ENCODE measurements at regions of chr7 and their contacts with region 1.

Region 1: DNA sequence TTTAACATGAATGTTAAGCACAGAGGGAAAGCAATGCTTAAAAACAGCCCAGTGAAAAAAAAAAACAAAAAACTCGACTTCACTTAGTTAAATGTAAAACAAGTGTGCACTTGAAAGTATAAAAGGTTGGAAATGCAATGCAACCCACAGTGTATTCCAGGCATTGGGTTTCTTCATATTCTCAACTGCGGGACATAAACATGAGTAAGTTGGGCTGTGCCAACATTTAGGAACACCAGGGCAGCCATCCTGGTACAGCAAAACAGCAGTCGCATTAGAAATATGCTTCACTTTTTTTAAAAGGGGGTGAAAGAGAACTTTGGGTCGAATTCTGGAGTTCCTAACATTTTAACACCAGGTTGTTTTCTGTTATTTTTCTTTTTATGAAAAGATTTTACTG is 937 bp downstream of the STEAP1 start:
- DNase-seq: no peak
- ATAC-seq: no peak
- H3K4me3 ChIP-seq: no peak overlapping the region
- H3K4me3 Mint-ChIP-seq: no peak overlapping the region
- H3K27ac ChIP-seq: no peak overlapping the region
- H3K27ac Mint-ChIP-seq: no peak overlapping the region
- H3K4me1 ChIP-seq: no peaks in the 10 kb centered on the region
- H3K4me1 Mint-ChIP-seq: peaks cover 3% of the 10 kb centered on the region
- H3K27me3 ChIP-seq: no peaks in the 10 kb centered on the region
- H3K27me3 Mint-ChIP-seq: peaks cover 22% of the 10 kb centered on the region
- CTCF ChIP-seq: no peak

Region 2: DNA sequence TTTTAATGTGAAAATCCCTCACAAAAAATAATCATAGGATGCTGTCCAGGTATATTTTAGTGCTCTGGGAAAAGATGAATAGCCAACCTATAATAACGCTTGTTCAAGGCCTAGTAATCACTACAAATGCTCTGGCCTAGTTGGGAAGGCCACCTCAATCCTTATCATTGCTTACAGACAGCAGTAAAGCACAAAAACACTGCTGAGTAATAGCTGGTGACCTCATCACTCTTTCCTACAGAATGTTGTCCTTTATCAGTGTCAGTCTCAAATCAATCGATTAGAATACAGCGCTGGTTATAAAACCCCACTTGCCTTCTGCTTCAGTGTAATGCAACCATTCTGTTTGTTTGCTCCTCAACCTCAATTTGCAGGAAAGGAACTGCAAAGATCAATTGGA is 73.6 kb before region 1 on chr7:
- CTCF ChIA-PET with region 1: no interaction called
- POLR2A ChIA-PET with region 1: no interaction called
- intact Hi-C with region 1: no loop called
- DNase-seq: no peak
- ATAC-seq: no peak
- H3K4me3 ChIP-seq: no peak overlapping the region
- H3K4me3 Mint-ChIP-seq: no peak overlapping the region
- H3K27ac ChIP-seq: no peak overlapping the region
- H3K27ac Mint-ChIP-seq: no peak overlapping the region
- H3K4me1 ChIP-seq: no peaks in the 10 kb centered on the region
- H3K4me1 Mint-ChIP-seq: no peaks in the 10 kb centered on the region
- H3K27me3 ChIP-seq: peaks cover 0 to 2% of the 10 kb centered on the region in 2 experiments
- H3K27me3 Mint-ChIP-seq: peaks cover 6% of the 10 kb centered on the region
- CTCF ChIP-seq: no peak

Region 3: GRCh38 chr7:90244909-90245851 is 90.0 kb after region 1 on chr7 and contains the start of gene CFAP69:
- CTCF ChIA-PET with region 1: interaction called, 4 read pairs
- POLR2A ChIA-PET with region 1: no interaction called
- intact Hi-C with region 1: loop called in 1 of 2 experiments (anchors 5 kb)
- DNase-seq: peak; percentile 71 to 90 (median 84)
- ATAC-seq: peak; percentile 86
- H3K4me3 ChIP-seq: peak within 1 kb of the TSS; percentile 78 to 83
- H3K4me3 Mint-ChIP-seq: peak within 1 kb of the TSS; percentile 92
- H3K27ac ChIP-seq: peak within 1 kb of the TSS in 1 of 2 experiments; percentile 54
- H3K27ac Mint-ChIP-seq: no peak within 1 kb of the TSS
- H3K4me1 ChIP-seq: peaks cover 3% of the 10 kb centered on the region
- H3K4me1 Mint-ChIP-seq: peaks cover 22% of the 10 kb centered on the region
- H3K27me3 ChIP-seq: peaks cover 0 to 9% of the 10 kb centered on the region in 2 experiments
- H3K27me3 Mint-ChIP-seq: peaks cover 54% of the 10 kb centered on the region
- CTCF ChIP-seq: peak; percentile 19
- total RNA-seq, gene CFAP69: not detected

Region 4: DNA sequence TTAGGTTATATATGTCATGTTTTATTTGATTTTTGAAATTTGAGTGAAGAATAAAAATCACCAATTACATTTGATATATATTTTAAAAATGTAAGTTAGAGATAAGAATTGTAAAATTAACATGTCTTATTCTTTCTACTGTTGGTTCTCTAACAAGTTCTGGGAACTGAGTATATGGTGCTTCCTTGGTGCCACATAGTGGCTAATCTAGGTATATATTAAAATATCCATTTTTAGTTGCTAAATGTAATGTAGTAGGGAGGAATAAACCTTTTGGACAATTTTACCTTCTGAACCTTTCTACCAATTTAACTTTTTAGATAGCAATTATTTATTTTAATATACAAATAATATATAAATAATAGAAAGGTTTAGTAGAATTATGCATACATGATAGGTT is 107.2 kb after region 1 on chr7:
- CTCF ChIA-PET with region 1: no interaction called
- POLR2A ChIA-PET with region 1: no interaction called
- intact Hi-C with region 1: loop called (anchors 2 to 5 kb)
- DNase-seq: peak in 1 of 9 experiments; percentile 18
- ATAC-seq: peak; percentile 56
- H3K4me3 ChIP-seq: no peak overlapping the region
- H3K4me3 Mint-ChIP-seq: no peak overlapping the region
- H3K27ac ChIP-seq: no peak overlapping the region
- H3K27ac Mint-ChIP-seq: no peak overlapping the region
- H3K4me1 ChIP-seq: no peaks in the 10 kb centered on the region
- H3K4me1 Mint-ChIP-seq: no peaks in the 10 kb centered on the region
- H3K27me3 ChIP-seq: no peaks in the 10 kb centered on the region
- H3K27me3 Mint-ChIP-seq: peaks cover 15% of the 10 kb centered on the region
- CTCF ChIP-seq: peak; percentile 51

Region 5: GRCh38 chr7:90403174-90404113 is 248.2 kb after region 1 on chr7 and contains the start of gene CLDN12:
- CTCF ChIA-PET with region 1: no interaction called
- POLR2A ChIA-PET with region 1: no interaction called
- intact Hi-C with region 1: loop called in 1 of 2 experiments (anchors 1 kb)
- DNase-seq: peak; percentile 44 to 94 (median 71)
- ATAC-seq: peak; percentile 98
- H3K4me3 ChIP-seq: peak within 1 kb of the TSS; percentile 64 to 84
- H3K4me3 Mint-ChIP-seq: peak within 1 kb of the TSS; percentile 96
- H3K27ac ChIP-seq: peak within 1 kb of the TSS; percentile 50 to 66
- H3K27ac Mint-ChIP-seq: peak within 1 kb of the TSS; percentile 93
- H3K4me1 ChIP-seq: peaks cover 11% of the 10 kb centered on the region
- H3K4me1 Mint-ChIP-seq: peaks cover 18% of the 10 kb centered on the region
- H3K27me3 ChIP-seq: no peaks in the 10 kb centered on the region
- H3K27me3 Mint-ChIP-seq: no peaks in the 10 kb centered on the region
- CTCF ChIP-seq: no peak
- total RNA-seq, gene CLDN12: 1.8 to 1.9 TPM

Region 6: GRCh38 chr7:90424720-90425119 is 269.5 kb after region 1 on chr7:
- CTCF ChIA-PET with region 1: interaction called, 44 read pairs
- POLR2A ChIA-PET with region 1: no interaction called
- intact Hi-C with region 1: loop called (anchors 1 kb)
- DNase-seq: no peak
- ATAC-seq: no peak
- H3K4me3 ChIP-seq: no peak overlapping the region
- H3K4me3 Mint-ChIP-seq: no peak overlapping the region
- H3K27ac ChIP-seq: no peak overlapping the region
- H3K27ac Mint-ChIP-seq: no peak overlapping the region
- H3K4me1 ChIP-seq: no peaks in the 10 kb centered on the region
- H3K4me1 Mint-ChIP-seq: no peaks in the 10 kb centered on the region
- H3K27me3 ChIP-seq: no peaks in the 10 kb centered on the region
- H3K27me3 Mint-ChIP-seq: peaks cover 2% of the 10 kb centered on the region
- CTCF ChIP-seq: no peak

Region 7: GRCh38 chr7:90430614-90431471 is 275.6 kb after region 1 on chr7:
- CTCF ChIA-PET with region 1: interaction called, 44 read pairs
- POLR2A ChIA-PET with region 1: interaction called, 7 read pairs
- intact Hi-C with region 1: loop called (anchors 1 kb)
- DNase-seq: no peak
- ATAC-seq: no peak
- H3K4me3 ChIP-seq: no peak overlapping the region
- H3K4me3 Mint-ChIP-seq: no peak overlapping the region
- H3K27ac ChIP-seq: no peak overlapping the region
- H3K27ac Mint-ChIP-seq: no peak overlapping the region
- H3K4me1 ChIP-seq: no peaks in the 10 kb centered on the region
- H3K4me1 Mint-ChIP-seq: no peaks in the 10 kb centered on the region
- H3K27me3 ChIP-seq: no peaks in the 10 kb centered on the region
- H3K27me3 Mint-ChIP-seq: peaks cover 18% of the 10 kb centered on the region
- CTCF ChIP-seq: no peak